ENCODE measurements at regions of chr7 and their contacts with region 1.

Region 1: GRCh38 chr7:137388916-137389315 is 45.4 kb upstream of the PTN start:
- DNase-seq: no peak
- H3K4me3 ChIP-seq: no peak overlapping the region
- H3K27ac ChIP-seq: no peak overlapping the region
- H3K4me1 ChIP-seq: no peaks in the 10 kb centered on the region
- H3K27me3 ChIP-seq: no peaks in the 10 kb centered on the region
- CTCF ChIP-seq: no peak
- EP300 ChIP-seq: no peak
- POLR2A ChIP-seq: no peak

Region 2: GRCh38 chr7:138625849-138626230 is 1236.9 kb after region 1 on chr7:
- in situ Hi-C with region 1: no loop called
- intact Hi-C with region 1: loop called (anchors 5 kb)
- DNase-seq: no peak
- H3K4me3 ChIP-seq: no peak overlapping the region
- H3K27ac ChIP-seq: no peak overlapping the region
- H3K4me1 ChIP-seq: no peaks in the 10 kb centered on the region
- H3K27me3 ChIP-seq: no peaks in the 10 kb centered on the region
- CTCF ChIP-seq: no peak
- EP300 ChIP-seq: no peak
- POLR2A ChIP-seq: no peak

Measured in transverse colon (tissue), 4 donors.